ENCODE measurements at regions of chr10 and their contacts with region 1.

Region 1: GRCh38 chr10:92290837-92291615 is at the starts of genes CPEB3 and MARCHF5:
- DNase-seq: peak; percentile 96
- H3K4me3 Mint-ChIP-seq: peak within 1 kb of the TSS; percentile 95
- H3K27ac Mint-ChIP-seq: peak within 1 kb of the TSS; percentile 83
- H3K4me1 Mint-ChIP-seq: peaks cover 30% of the 10 kb centered on the region
- H3K27me3 Mint-ChIP-seq: peaks cover 4% of the 10 kb centered on the region

Region 2: GRCh38 chr10:92087750-92088395 is 203.2 kb before region 1 on chr10:
- CTCF ChIA-PET with region 1: interaction called, 44 read pairs
- DNase-seq: peak; percentile 74
- H3K4me3 Mint-ChIP-seq: no peak overlapping the region
- H3K27ac Mint-ChIP-seq: no peak overlapping the region
- H3K4me1 Mint-ChIP-seq: no peaks in the 10 kb centered on the region
- H3K27me3 Mint-ChIP-seq: no peaks in the 10 kb centered on the region

Region 3: GRCh38 chr10:92222603-92223275 is 68.3 kb before region 1 on chr10:
- CTCF ChIA-PET with region 1: no interaction called
- DNase-seq: no peak
- H3K4me3 Mint-ChIP-seq: no peak overlapping the region
- H3K27ac Mint-ChIP-seq: no peak overlapping the region
- H3K4me1 Mint-ChIP-seq: no peaks in the 10 kb centered on the region
- H3K27me3 Mint-ChIP-seq: no peaks in the 10 kb centered on the region

Region 4: GRCh38 chr10:92530421-92530820 is 239.4 kb after region 1 on chr10:
- CTCF ChIA-PET with region 1: no interaction called
- DNase-seq: no peak
- H3K4me3 Mint-ChIP-seq: no peak overlapping the region
- H3K27ac Mint-ChIP-seq: no peak overlapping the region
- H3K4me1 Mint-ChIP-seq: no peaks in the 10 kb centered on the region
- H3K27me3 Mint-ChIP-seq: no peaks in the 10 kb centered on the region